ENCODE measurements at regions of chr10 and their contacts with region 1.

Region 1: DNA sequence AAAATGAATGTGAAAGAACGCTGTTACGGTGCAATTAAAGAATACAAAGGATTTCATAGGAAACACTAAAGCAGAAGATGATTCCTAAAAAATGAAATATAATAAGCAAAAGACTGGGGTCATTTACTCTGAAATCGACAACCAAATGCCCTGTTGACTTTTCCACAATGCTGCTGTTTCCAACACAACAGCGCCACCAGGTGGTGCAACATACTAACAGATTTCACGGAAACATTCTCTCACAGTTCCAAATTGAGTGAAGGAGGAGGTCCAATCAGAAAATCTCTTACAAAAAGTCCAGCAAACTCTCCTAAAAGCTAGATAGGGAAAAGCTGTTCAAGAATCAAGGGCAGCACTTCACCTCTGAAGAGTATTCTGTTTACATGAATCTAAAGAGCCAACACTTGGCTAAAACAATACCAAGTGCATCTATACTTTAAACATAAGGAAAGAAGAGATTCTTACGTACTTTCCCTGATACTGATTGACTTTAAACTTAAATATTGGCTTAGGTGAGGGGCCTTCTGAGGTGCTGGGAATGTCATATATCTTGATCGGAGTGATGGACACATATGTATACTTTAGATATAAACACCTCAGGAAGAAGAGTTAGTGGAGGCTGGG is 55.9 kb downstream of the UPF2 start:
- DNase-seq: peak; percentile 56 to 87 (median 67)
- ATAC-seq: peak; percentile 89
- H3K4me3 ChIP-seq: no peak overlapping the region
- H3K27ac ChIP-seq: no peak overlapping the region
- H3K4me1 ChIP-seq: no peaks in the 10 kb centered on the region; a peak in 1 of 5 replicates
- H3K27me3 ChIP-seq: no peaks in the 10 kb centered on the region
- CTCF ChIP-seq: peak; percentile 81 to 97 (median 87)
- EP300 ChIP-seq: no peak
- POLR2A ChIP-seq: no peak
- RAD21 ChIP-seq: peak; percentile 88 to 96

Region 2: DNA sequence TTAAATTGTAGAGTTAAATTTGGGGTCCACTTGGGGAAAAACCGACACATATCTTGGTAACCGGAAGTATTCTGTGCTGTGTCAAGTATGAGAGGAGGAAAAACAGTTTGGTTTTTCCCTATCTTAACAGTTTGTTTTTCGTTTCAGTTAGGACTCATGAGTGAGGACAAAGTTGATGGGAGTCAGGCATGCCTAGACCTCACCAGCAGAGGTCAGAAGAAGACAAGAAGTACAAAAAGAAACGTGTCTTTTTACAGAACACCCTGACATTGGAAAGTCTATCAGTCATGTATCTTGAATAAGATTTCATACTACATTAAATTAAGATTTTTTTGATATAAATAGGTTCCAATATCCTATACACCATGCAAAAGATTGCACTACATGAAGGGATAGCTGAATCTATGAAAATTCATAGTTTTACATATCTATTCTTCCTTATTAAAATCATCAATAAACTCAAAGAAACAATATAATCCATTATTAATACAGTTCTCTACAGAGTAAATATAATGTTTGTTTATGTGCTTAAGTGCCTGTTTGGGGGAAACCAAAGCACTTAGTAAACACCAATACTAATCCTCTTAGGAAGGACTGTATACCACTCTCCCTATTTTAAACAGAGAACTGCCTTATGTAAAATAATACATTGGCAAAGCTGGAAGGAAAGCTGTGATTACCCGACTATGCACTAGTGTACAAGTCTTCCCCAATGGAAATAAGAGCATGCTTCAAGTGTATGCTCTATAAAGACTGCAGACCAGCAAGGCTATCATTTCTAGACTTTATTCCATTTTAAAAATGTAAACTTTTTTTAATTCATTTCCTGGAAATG is 470.9 kb before region 1 on chr10:
- CTCF ChIA-PET with region 1: interaction called, 7 read pairs
- POLR2A ChIA-PET with region 1: no interaction called
- in situ Hi-C with region 1: loop called (anchors 25 kb)
- intact Hi-C with region 1: no loop called
- DNase-seq: peak; percentile 47 to 78 (median 56)
- ATAC-seq: peak; percentile 93
- H3K4me3 ChIP-seq: no peak overlapping the region
- H3K27ac ChIP-seq: peak overlapping the region; percentile 41; the same call in 2 of the 3 replicates
- H3K4me1 ChIP-seq: peaks cover 0 to 9% of the 10 kb centered on the region in 2 experiments; a peak in 2 of 5 replicates
- H3K27me3 ChIP-seq: no peaks in the 10 kb centered on the region
- CTCF ChIP-seq: peak; percentile 67 to 91 (median 84)
- EP300 ChIP-seq: no peak
- POLR2A ChIP-seq: no peak
- RAD21 ChIP-seq: peak; percentile 97 to 98

Region 3: DNA sequence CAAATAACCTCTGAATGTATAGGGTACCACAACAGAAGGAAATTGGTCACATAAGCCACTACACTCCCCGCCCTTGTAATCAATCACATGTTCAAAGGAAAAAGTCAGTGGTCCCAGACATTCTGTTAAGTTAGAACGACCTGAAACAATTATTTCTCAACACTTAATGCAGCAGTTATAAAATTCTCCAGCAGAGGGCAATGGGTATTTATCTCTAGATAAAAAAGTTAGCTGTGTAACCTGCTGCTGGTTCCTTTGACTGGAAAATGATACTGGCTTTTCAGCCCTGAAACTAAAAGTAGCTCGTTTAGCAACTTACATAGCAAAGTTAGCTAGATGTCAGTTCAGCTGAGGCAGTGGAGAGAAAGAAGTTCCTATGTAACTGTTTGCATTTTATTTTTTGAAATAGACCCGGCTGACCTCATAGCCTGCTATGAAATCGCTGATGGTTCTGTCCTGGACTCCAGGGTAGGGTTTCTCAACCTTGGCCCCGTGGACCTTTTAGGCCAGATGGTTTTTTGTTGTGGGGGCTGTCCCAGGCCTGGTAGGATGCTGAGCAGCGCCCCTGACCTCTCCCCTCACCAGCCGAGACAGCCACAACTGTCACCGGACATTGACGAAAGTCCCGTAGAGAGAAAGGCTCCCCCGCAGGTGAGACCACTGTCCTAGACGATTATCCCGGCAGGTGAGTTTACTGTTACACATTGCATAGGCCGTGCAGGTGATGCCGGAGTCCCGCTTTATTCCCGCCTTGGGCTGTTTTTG is 203.7 kb before region 1 on chr10:
- CTCF ChIA-PET with region 1: interaction called, 7 read pairs
- POLR2A ChIA-PET with region 1: no interaction called
- in situ Hi-C with region 1: no loop called
- intact Hi-C with region 1: loop called (anchors 2 kb)
- DNase-seq: peak; percentile 56 to 69 (median 60)
- ATAC-seq: peak; percentile 77
- H3K4me3 ChIP-seq: no peak overlapping the region
- H3K27ac ChIP-seq: no peak overlapping the region
- H3K4me1 ChIP-seq: peaks cover 3 to 4% of the 10 kb centered on the region in 2 experiments; a peak in 2 of 5 replicates
- H3K27me3 ChIP-seq: peaks cover 24 to 46% of the 10 kb centered on the region in 2 experiments
- CTCF ChIP-seq: peak; percentile 55 to 88 (median 73); a peak in 5 of 6 replicates
- EP300 ChIP-seq: no peak
- POLR2A ChIP-seq: no peak
- RAD21 ChIP-seq: peak; percentile 62 to 85

Region 4: GRCh38 chr10:11798845-11799735 is 187.6 kb before region 1 on chr10:
- CTCF ChIA-PET with region 1: no interaction called
- POLR2A ChIA-PET with region 1: no interaction called
- in situ Hi-C with region 1: loop called (anchors 5 kb)
- intact Hi-C with region 1: no loop called
- DNase-seq: no peak
- ATAC-seq: peak; percentile 43; the same call in 1 of the 3 replicates
- H3K4me3 ChIP-seq: no peak overlapping the region
- H3K27ac ChIP-seq: no peak overlapping the region
- H3K4me1 ChIP-seq: peaks cover 5 to 9% of the 10 kb centered on the region in 2 experiments; a peak in 4 of 5 replicates
- H3K27me3 ChIP-seq: peaks cover 18 to 35% of the 10 kb centered on the region in 2 experiments; a peak in 4 of 5 replicates
- CTCF ChIP-seq: no peak
- EP300 ChIP-seq: no peak
- POLR2A ChIP-seq: no peak
- RAD21 ChIP-seq: no peak

Region 5: DNA sequence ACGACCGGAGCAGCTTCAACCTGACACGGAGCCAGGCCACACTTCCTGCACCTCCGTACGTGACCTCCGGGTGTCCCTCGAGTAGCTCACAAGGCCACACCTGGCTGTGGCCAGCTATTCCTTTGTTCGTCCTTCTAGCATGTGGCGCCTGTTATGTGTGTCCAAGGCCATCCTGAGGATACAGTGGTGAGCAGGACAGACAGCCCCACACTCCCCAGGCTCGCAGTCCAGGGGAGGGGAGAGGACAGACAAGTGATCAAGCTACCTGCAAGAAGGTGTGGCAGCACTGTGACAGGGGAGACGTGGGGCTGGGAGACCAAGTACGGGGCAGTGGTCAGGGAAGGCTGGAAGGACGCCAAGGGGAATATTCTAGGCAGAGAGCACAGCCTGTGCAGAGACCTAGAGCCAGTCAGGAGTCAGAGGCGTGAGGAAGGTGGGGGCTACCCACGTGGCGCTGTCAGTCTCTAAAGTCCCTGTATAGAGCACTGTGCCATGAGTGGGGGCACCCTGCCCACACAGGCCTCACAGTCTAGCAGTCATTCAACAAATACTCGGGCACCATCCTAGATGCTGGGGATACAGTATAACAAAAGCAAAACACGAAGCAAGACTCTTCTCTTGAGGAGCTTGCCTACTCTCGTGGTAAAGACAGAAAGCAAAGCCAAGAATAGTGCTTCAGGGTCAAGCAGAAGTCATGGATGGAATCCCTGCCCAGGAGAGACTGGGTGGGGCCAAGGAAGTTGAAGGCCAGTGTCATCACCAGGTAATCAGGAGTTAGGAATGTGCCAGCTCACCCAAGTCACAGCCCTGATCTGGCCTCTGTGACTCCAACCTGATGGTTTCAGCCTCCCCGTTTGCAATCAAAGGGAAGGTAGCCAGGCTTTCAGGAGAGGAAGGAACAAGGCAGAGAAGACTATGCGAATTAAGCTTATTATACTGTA is 105.0 kb before region 1 on chr10:
- CTCF ChIA-PET with region 1: no interaction called
- POLR2A ChIA-PET with region 1: no interaction called
- in situ Hi-C with region 1: no loop called
- intact Hi-C with region 1: loop called (anchors 2 kb)
- DNase-seq: peak; percentile 48 to 78 (median 65)
- ATAC-seq: peak; percentile 77
- H3K4me3 ChIP-seq: no peak overlapping the region
- H3K27ac ChIP-seq: no peak overlapping the region
- H3K4me1 ChIP-seq: peaks cover 12 to 56% of the 10 kb centered on the region in 2 experiments; a peak in 4 of 5 replicates
- H3K27me3 ChIP-seq: no peaks in the 10 kb centered on the region
- CTCF ChIP-seq: peak; percentile 52 to 63 (median 60)
- EP300 ChIP-seq: no peak
- POLR2A ChIP-seq: no peak
- RAD21 ChIP-seq: peak in 1 of 2 experiments; percentile 60; a peak in 2 of 4 replicates

Measured in K562 (cell line).